ENCODE measurements at regions of chr4 and their contacts with region 1.

Region 1: DNA sequence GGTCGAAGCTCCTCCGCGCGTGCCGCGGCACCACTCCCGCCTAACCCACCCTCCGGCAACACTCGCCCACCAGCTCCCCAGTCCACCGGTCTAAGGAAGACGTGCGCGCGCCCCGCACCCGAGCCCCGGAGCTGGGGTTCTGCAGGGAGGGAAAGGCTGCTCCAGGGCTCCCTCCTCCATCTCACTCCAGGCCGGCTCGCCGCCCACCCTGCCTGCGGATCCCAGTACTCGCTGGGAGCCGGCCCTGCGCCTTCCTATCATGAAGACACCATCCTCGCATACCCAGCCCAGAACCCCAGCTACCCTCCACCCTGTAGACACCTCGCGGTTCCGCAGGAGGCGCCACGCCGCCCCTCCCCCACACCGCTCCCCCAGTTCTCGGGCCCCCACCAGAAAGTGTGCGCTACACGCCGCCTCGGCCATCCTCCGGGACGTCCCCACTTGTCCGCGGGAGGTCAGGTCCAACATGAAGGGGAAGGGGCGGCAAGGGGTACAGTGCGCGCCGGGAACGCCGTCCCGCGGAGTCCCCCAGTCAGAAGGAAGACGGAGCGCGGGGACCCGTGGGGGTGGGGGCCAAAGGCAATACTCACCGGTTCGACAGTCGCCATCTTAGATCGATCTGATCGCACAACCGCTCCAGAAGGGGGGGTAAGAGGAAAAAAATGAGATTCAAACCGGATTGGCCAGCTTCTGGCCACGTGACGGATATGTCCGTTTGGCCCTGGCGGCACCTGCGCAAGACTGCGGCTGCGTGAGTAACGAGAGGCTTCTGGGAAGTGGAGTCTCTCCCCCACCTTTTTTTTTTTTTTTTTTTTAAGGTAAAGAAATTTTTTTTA is at the start of gene EIF4E:
- DNase-seq: peak; percentile 99
- H3K4me3 ChIP-seq: peak within 1 kb of the TSS; percentile 91 to 95 (median 91)
- H3K27ac ChIP-seq: peak within 1 kb of the TSS; percentile 93
- H3K4me1 ChIP-seq: peaks cover 32% of the 10 kb centered on the region
- H3K27me3 ChIP-seq: no peaks in the 10 kb centered on the region
- CTCF ChIP-seq: peak in 1 of 2 donors; percentile 26
- POLR2A ChIP-seq: peak; percentile 81
- total RNA-seq, gene EIF4E: 103 and 107 TPM in 2 replicates

Region 2: GRCh38 chr4:98260579-98261290 is 668.0 kb before region 1 on chr4:
- CTCF ChIA-PET with region 1: no interaction called
- POLR2A ChIA-PET with region 1: no interaction called
- dilution Hi-C with region 1: no loop called
- intact Hi-C with region 1: loop called (anchors 5 kb)
- DNase-seq: peak; percentile 98
- H3K4me3 ChIP-seq: peak overlapping the region; percentile 73 to 76 (median 73)
- H3K27ac ChIP-seq: peak overlapping the region; percentile 86
- H3K4me1 ChIP-seq: peaks cover 22% of the 10 kb centered on the region
- H3K27me3 ChIP-seq: no peaks in the 10 kb centered on the region
- CTCF ChIP-seq: no peak
- POLR2A ChIP-seq: peak; percentile 94

Region 3: GRCh38 chr4:98688411-98689290 is 240.1 kb before region 1 on chr4:
- CTCF ChIA-PET with region 1: interaction called, 6 read pairs
- POLR2A ChIA-PET with region 1: interaction called, 7 read pairs
- dilution Hi-C with region 1: no loop called
- intact Hi-C with region 1: loop called (anchors 10 kb)
- DNase-seq: peak; percentile 90
- H3K4me3 ChIP-seq: peak overlapping the region in 1 of 3 experiments; percentile 34
- H3K27ac ChIP-seq: peak overlapping the region; percentile 85
- H3K4me1 ChIP-seq: peaks cover 59% of the 10 kb centered on the region
- H3K27me3 ChIP-seq: no peaks in the 10 kb centered on the region
- CTCF ChIP-seq: no peak
- POLR2A ChIP-seq: no peak

Region 4: DNA sequence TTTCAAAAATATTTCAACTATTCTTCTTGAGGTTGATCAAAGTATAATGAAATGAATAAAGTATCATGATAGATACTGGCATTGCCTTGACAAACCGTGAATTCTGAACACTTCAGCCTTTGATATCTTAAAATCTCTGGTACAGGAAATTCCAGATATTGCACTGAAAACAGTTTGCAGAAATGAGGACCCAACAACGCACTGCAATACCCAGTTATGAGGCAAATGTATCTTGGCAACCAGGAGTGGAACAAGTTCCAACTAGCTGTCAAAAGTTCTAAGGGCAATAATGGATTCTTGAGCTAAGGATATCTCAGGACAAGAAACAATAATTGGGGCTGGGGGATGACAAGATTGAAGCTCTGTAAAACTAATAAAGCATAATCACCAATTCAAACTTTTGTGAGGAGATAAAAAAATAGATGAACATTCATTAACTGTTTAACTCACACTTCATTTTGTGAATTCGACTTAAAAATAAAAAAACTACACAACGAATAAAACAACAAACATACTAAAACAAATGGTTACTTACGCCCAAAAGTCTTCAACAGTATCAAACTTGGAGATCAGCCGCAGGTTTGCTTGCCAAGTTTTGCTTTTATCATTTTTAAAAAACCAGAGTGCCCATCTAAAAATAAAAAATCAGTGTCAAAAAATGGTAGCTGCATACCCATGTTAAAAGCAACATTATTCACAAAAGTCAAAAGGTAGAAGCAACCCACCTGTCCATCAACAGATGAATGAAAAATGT is 37.8 kb before region 1 on chr4:
- CTCF ChIA-PET with region 1: no interaction called
- POLR2A ChIA-PET with region 1: interaction called, 3 read pairs
- dilution Hi-C with region 1: no loop called
- intact Hi-C with region 1: loop called (anchors 2 kb)
- DNase-seq: peak; percentile 81
- H3K4me3 ChIP-seq: no peak overlapping the region
- H3K27ac ChIP-seq: no peak overlapping the region
- H3K4me1 ChIP-seq: no peaks in the 10 kb centered on the region
- H3K27me3 ChIP-seq: no peaks in the 10 kb centered on the region
- CTCF ChIP-seq: no peak
- POLR2A ChIP-seq: no peak

Region 5: GRCh38 chr4:99062120-99062519 is 133.4 kb after region 1 on chr4:
- CTCF ChIA-PET with region 1: no interaction called
- POLR2A ChIA-PET with region 1: no interaction called
- dilution Hi-C with region 1: no loop called
- intact Hi-C with region 1: loop called (anchors 1 kb)
- DNase-seq: no peak
- H3K4me3 ChIP-seq: no peak overlapping the region
- H3K27ac ChIP-seq: no peak overlapping the region
- H3K4me1 ChIP-seq: peaks cover 18% of the 10 kb centered on the region
- H3K27me3 ChIP-seq: no peaks in the 10 kb centered on the region
- CTCF ChIP-seq: no peak
- POLR2A ChIP-seq: no peak

Measured in endothelial cell of umbilical vein (primary cell).